ENCODE measurements at regions of chr13 and their contacts with region 1.

Region 1: GRCh38 chr13:20525690-20526544 is at the start of gene CRYL1:
- DNase-seq: peak; percentile 76
- H3K4me3 Mint-ChIP-seq: peak within 1 kb of the TSS; percentile 83
- H3K27ac Mint-ChIP-seq: peak within 1 kb of the TSS; percentile 83
- H3K4me1 Mint-ChIP-seq: peaks cover 32% of the 10 kb centered on the region
- H3K27me3 Mint-ChIP-seq: no peaks in the 10 kb centered on the region
- total RNA-seq, gene CRYL1: 8.9 to 9.3 TPM

Region 2: DNA sequence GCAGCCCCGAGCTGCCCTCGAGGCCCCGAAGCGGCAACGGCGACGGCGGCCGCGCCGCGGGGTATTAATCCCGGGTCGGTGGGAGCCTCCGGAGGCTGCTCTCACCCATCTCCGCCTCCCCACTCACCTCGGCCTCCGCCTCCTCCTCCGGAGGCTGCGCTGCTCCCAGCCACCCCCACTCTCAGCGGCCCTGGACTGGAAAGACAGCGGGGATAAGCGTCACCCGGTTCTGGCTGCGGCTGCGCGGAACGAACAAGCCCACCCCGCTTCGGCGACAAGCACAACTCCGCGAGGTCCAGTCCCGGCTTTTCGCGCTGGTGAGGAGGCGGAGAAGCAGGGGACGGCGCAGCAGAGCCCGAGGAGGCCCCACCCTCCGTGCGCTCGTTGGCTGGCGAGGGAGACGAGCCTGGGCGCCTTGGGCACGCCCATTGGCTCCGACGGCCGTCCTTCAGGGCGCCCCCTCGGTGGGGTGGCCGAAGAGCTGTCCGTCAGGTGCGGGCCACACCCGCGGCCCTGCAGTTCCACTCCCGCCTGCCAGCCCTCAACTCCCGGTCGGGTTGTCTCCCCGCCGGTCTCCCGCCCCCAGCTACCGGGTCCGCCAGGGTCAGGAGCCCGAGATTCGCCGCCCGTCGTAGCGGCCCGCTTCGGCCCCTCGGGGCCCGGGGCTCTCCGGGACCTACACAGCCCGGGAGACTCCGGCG is 662.4 kb before region 1 on chr13 and contains the start of gene ZMYM5:
- CTCF ChIA-PET with region 1: no interaction called
- intact Hi-C with region 1: loop called (anchors 5 kb)
- DNase-seq: peak; percentile 98
- H3K4me3 Mint-ChIP-seq: peak within 1 kb of the TSS; percentile 94
- H3K27ac Mint-ChIP-seq: peak within 1 kb of the TSS; percentile 95
- H3K4me1 Mint-ChIP-seq: peaks cover 37% of the 10 kb centered on the region
- H3K27me3 Mint-ChIP-seq: no peaks in the 10 kb centered on the region
- total RNA-seq, gene ZMYM5: 8.1 to 8.5 TPM

Region 3: GRCh38 chr13:20411638-20412360 is 114.1 kb before region 1 on chr13:
- CTCF ChIA-PET with region 1: no interaction called
- intact Hi-C with region 1: loop called (anchors 1 kb)
- DNase-seq: peak; percentile 78
- H3K4me3 Mint-ChIP-seq: no peak overlapping the region
- H3K27ac Mint-ChIP-seq: peak overlapping the region; percentile 50
- H3K4me1 Mint-ChIP-seq: peaks cover 21% of the 10 kb centered on the region
- H3K27me3 Mint-ChIP-seq: no peaks in the 10 kb centered on the region

Region 4: GRCh38 chr13:20475927-20476691 is 49.8 kb before region 1 on chr13:
- CTCF ChIA-PET with region 1: interaction called, 4 read pairs
- intact Hi-C with region 1: loop called (anchors 2 kb)
- DNase-seq: peak; percentile 82
- H3K4me3 Mint-ChIP-seq: peak overlapping the region; percentile 65
- H3K27ac Mint-ChIP-seq: peak overlapping the region; percentile 92
- H3K4me1 Mint-ChIP-seq: peaks cover 27% of the 10 kb centered on the region
- H3K27me3 Mint-ChIP-seq: no peaks in the 10 kb centered on the region

Region 5: GRCh38 chr13:20495082-20496023 is 30.6 kb before region 1 on chr13:
- CTCF ChIA-PET with region 1: interaction called, 3 read pairs
- intact Hi-C with region 1: loop called (anchors 2 kb)
- DNase-seq: peak; percentile 81
- H3K4me3 Mint-ChIP-seq: no peak overlapping the region
- H3K27ac Mint-ChIP-seq: no peak overlapping the region
- H3K4me1 Mint-ChIP-seq: no peaks in the 10 kb centered on the region
- H3K27me3 Mint-ChIP-seq: no peaks in the 10 kb centered on the region

Region 6: DNA sequence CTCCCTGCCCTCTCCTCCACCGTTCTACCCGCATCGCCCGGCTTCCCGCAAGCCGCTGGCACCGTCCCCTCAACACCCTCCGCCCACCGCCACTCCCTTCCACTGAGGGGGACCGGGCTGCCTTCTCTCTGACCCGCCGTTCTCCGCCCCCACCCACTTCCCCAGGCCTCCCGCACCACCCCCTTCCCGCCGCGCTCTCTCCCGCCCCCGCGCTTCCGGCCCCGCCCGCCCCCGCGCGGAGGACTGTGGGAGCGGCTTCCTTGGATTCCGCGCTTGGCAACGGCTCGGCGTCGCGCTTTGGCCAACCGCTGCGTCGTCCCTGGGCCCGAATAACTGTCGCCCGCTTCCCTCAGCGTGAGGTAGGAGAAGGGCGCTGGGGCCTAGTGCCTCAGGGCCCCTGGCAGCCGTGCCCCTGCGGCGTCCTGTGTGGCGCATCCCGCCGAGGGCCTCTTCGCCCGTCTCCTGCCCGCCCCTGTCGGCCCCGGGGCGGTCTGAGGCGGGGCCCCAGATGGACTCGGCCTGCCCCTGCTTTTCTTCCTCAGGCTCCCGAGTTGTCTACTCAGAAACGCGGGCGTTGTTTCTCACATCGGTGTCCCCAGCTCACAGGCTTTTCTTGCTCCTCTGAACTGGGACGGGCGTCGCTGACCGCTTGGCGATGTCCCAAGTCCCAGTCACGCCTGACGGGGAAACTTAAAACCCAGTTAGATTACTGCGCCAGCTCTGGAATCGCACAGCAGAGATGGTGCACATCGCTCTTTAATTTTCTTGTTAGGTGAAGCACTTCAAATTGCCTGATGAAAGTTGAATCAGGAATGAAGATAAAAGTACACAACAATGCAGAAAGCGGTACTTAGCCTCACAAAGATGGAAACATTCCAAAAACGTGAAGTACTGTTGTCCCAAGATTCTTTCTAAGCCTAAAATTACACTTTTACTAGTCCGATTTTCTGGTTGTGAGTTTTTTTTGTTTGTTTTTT is 41.3 kb after region 1 on chr13 and contains the start of gene IFT88:
- CTCF ChIA-PET with region 1: interaction called, 3 read pairs
- intact Hi-C with region 1: loop called (anchors 1 kb)
- DNase-seq: peak; percentile 86
- H3K4me3 Mint-ChIP-seq: peak within 1 kb of the TSS; percentile 84
- H3K27ac Mint-ChIP-seq: peak within 1 kb of the TSS; percentile 87
- H3K4me1 Mint-ChIP-seq: peaks cover 23% of the 10 kb centered on the region
- H3K27me3 Mint-ChIP-seq: no peaks in the 10 kb centered on the region
- total RNA-seq, gene IFT88: 2.7 TPM

Region 7: DNA sequence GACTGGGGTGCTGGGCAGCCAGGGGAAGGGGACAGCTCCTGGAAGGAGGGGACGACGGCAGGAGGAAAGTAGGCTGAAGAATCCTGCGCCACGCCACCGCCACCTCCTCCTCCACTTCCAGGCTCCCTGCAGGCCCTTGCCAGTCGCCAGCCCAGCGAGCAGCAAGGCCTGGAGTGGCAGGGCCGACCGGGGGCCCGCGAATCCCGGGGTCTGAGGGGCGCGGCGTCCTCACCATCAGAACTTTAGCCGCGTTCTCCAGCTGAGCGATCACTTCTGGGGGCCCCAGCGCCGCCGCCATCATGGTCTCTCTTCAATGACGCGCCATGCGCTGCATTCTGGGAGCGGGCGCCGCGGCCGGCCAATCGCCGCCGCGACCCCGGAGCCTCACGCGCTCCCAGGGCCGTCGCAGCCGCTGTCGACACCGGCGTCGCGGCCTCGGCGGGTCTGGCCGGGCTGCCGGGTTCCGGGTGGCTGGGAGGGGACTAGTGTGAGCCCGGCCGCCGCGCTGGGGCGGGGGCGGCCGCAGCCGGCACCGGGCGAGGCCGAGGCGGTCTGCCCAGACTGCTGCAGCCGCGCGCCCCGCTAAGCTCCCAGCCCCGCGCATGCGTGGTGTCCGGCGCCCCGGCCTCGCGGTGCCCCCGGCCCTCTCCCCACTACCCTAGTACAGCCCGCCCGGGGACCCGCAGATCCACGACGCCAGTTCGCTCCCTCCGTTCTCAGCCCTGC is 376.7 kb after region 1 on chr13 and contains the start of gene XPO4:
- CTCF ChIA-PET with region 1: no interaction called
- intact Hi-C with region 1: loop called (anchors 5 kb)
- DNase-seq: peak; percentile 83
- H3K4me3 Mint-ChIP-seq: peak within 1 kb of the TSS; percentile 95
- H3K27ac Mint-ChIP-seq: peak within 1 kb of the TSS; percentile 95
- H3K4me1 Mint-ChIP-seq: peaks cover 29% of the 10 kb centered on the region
- H3K27me3 Mint-ChIP-seq: no peaks in the 10 kb centered on the region
- total RNA-seq, gene XPO4: 20.4 to 21.2 TPM

Measured in activated naive CD4-positive, alpha-beta T cell treated with anti-CD3 and anti-CD28 coated beads for 36 hours (primary cell).